ENCODE measurements at regions of chr15 and their contacts with region 1.

Region 1: GRCh38 chr15:70763120-70763878 is at the start of gene UACA:
- DNase-seq: peak; percentile 98 to 99
- H3K4me3 ChIP-seq: peak within 1 kb of the TSS; percentile 96
- H3K4me3 Mint-ChIP-seq: peak within 1 kb of the TSS; percentile 89
- H3K27ac Mint-ChIP-seq: peak within 1 kb of the TSS; percentile 93
- H3K4me1 ChIP-seq: peaks cover 54% of the 10 kb centered on the region
- H3K4me1 Mint-ChIP-seq: peaks cover 37% of the 10 kb centered on the region
- H3K27me3 ChIP-seq: no peaks in the 10 kb centered on the region
- H3K27me3 Mint-ChIP-seq: no peaks in the 10 kb centered on the region
- CTCF ChIP-seq: no peak
- total RNA-seq, gene UACA: 120 and 141 TPM in 2 replicates

Region 2: GRCh38 chr15:70670680-70671079 is 92.6 kb before region 1 on chr15:
- CTCF ChIA-PET with region 1: no interaction called
- POLR2A ChIA-PET with region 1: no interaction called
- intact Hi-C with region 1: no loop called
- DNase-seq: no peak
- H3K4me3 ChIP-seq: no peak overlapping the region
- H3K4me3 Mint-ChIP-seq: no peak overlapping the region
- H3K27ac Mint-ChIP-seq: no peak overlapping the region
- H3K4me1 ChIP-seq: peaks cover 19% of the 10 kb centered on the region
- H3K4me1 Mint-ChIP-seq: no peaks in the 10 kb centered on the region
- H3K27me3 ChIP-seq: no peaks in the 10 kb centered on the region; the same call in 1 of the 2 replicates
- H3K27me3 Mint-ChIP-seq: no peaks in the 10 kb centered on the region
- CTCF ChIP-seq: no peak

Region 3: DNA sequence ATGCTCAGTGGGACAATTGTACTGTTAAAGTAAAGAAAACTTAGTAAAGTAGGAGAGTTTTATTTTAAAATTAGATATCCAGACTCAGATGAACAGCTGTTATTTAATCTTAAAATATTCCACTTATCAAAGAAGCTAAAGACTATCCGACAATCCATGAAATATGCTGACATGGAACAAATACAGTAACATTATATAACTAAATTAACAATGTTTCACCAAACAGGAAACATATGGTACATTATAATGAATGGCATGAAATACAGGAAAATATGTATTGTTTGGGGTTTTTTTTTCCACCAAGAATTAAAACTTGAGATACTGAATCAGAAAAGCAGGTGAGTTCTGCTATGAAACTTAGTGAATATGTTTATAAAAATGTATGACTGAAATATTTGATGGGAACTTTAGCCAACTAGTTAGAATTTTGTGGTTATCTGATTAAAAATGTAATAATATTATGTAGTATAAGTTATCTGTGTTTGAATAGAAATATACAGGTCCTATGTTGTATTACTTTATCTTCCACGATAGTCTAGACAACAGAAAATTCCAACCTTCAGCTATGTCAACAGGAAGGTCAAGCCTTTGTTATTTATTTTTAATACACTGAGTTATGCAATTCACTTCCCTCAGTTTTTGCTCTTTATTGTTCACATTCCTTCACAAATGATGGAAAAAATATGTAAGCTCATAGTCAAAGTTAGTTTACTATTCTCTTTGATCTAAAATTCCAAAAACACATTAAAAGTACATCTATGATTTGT is 72.6 kb before region 1 on chr15:
- CTCF ChIA-PET with region 1: no interaction called
- POLR2A ChIA-PET with region 1: no interaction called
- intact Hi-C with region 1: no loop called
- DNase-seq: no peak
- H3K4me3 ChIP-seq: no peak overlapping the region
- H3K4me3 Mint-ChIP-seq: no peak overlapping the region
- H3K27ac Mint-ChIP-seq: no peak overlapping the region
- H3K4me1 ChIP-seq: peaks cover 30% of the 10 kb centered on the region
- H3K4me1 Mint-ChIP-seq: peaks cover 12% of the 10 kb centered on the region
- H3K27me3 ChIP-seq: no peaks in the 10 kb centered on the region
- H3K27me3 Mint-ChIP-seq: no peaks in the 10 kb centered on the region
- CTCF ChIP-seq: no peak

Region 4: DNA sequence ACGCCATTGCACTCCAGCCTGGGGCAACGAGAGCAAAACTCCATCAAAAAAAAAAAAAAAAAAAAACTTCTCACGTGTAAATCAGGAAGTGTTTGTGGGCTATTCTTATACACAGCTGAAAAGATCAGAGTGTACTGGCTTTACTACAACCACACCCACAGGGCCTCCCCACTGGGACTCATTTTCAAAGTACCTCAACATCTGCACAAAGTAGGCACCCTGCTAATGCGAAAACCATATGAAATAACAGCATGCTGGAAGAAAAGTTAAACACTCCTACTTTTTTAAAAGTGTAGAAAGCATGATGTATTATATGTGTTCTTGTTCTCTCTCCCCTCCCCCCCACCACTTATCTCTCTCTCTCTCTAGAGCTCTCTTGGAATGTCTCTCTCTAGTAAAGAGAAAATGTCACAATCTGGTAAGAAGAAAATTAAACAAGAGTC is 11.1 kb before region 1 on chr15:
- CTCF ChIA-PET with region 1: interaction called, 11 read pairs
- POLR2A ChIA-PET with region 1: no interaction called
- intact Hi-C with region 1: no loop called
- DNase-seq: no peak
- H3K4me3 ChIP-seq: no peak overlapping the region
- H3K4me3 Mint-ChIP-seq: no peak overlapping the region
- H3K27ac Mint-ChIP-seq: no peak overlapping the region
- H3K4me1 ChIP-seq: peaks cover 13% of the 10 kb centered on the region; the same call in 1 of the 2 replicates
- H3K4me1 Mint-ChIP-seq: peaks cover 18% of the 10 kb centered on the region
- H3K27me3 ChIP-seq: no peaks in the 10 kb centered on the region
- H3K27me3 Mint-ChIP-seq: no peaks in the 10 kb centered on the region
- CTCF ChIP-seq: no peak

Region 5: GRCh38 chr15:70778258-70779076 is 15.2 kb after region 1 on chr15:
- CTCF ChIA-PET with region 1: no interaction called
- POLR2A ChIA-PET with region 1: no interaction called
- intact Hi-C with region 1: loop called (anchors 1 kb)
- DNase-seq: no peak
- H3K4me3 ChIP-seq: no peak overlapping the region
- H3K4me3 Mint-ChIP-seq: peak overlapping the region; percentile 51
- H3K27ac Mint-ChIP-seq: peak overlapping the region; percentile 81
- H3K4me1 ChIP-seq: peaks cover 48% of the 10 kb centered on the region
- H3K4me1 Mint-ChIP-seq: peaks cover 47% of the 10 kb centered on the region
- H3K27me3 ChIP-seq: no peaks in the 10 kb centered on the region
- H3K27me3 Mint-ChIP-seq: no peaks in the 10 kb centered on the region
- CTCF ChIP-seq: no peak

Region 6: GRCh38 chr15:70788114-70789049 is 25.1 kb after region 1 on chr15:
- CTCF ChIA-PET with region 1: no interaction called
- POLR2A ChIA-PET with region 1: interaction called, 4 read pairs
- intact Hi-C with region 1: loop called (anchors 1 kb)
- DNase-seq: peak; percentile 83 to 84
- H3K4me3 ChIP-seq: no peak overlapping the region
- H3K4me3 Mint-ChIP-seq: peak overlapping the region; percentile 55
- H3K27ac Mint-ChIP-seq: peak overlapping the region; percentile 91
- H3K4me1 ChIP-seq: peaks cover 84% of the 10 kb centered on the region
- H3K4me1 Mint-ChIP-seq: peaks cover 42% of the 10 kb centered on the region
- H3K27me3 ChIP-seq: no peaks in the 10 kb centered on the region
- H3K27me3 Mint-ChIP-seq: no peaks in the 10 kb centered on the region
- CTCF ChIP-seq: no peak

Region 7: DNA sequence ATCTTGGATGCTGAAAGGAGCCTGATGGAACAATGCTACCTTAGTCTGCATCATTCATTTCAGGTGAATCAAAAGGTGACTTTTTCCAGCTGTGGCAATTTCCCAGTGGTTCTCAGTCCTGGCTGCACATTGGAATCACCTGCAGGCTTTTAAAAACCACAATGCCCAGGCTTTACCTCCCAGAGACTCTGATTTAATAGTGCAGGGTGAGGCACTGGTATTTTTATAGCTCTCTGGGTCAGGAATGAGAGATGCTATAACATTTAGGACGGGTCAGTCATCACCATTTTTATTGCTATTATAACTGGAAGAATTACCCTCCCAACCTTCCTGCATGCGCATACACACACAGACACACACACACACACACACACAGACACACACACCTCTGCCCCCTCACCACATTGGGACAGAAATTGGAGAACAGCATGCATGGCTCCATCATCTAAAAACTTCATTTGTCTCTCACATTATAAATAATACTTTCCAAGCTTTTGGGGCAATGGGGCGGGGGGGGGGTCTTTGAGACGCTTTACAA is 49.6 kb after region 1 on chr15:
- CTCF ChIA-PET with region 1: interaction called, 3 read pairs
- POLR2A ChIA-PET with region 1: interaction called, 6 read pairs
- intact Hi-C with region 1: loop called (anchors 1 kb)
- DNase-seq: no peak
- H3K4me3 ChIP-seq: no peak overlapping the region
- H3K4me3 Mint-ChIP-seq: peak overlapping the region; percentile 72
- H3K27ac Mint-ChIP-seq: no peak overlapping the region
- H3K4me1 ChIP-seq: no peaks in the 10 kb centered on the region
- H3K4me1 Mint-ChIP-seq: peaks cover 25% of the 10 kb centered on the region
- H3K27me3 ChIP-seq: no peaks in the 10 kb centered on the region
- H3K27me3 Mint-ChIP-seq: no peaks in the 10 kb centered on the region
- CTCF ChIP-seq: no peak

Region 8: GRCh38 chr15:70955151-70955550 is 191.9 kb after region 1 on chr15:
- CTCF ChIA-PET with region 1: no interaction called
- POLR2A ChIA-PET with region 1: no interaction called
- intact Hi-C with region 1: no loop called
- DNase-seq: no peak
- H3K4me3 ChIP-seq: no peak overlapping the region
- H3K4me3 Mint-ChIP-seq: no peak overlapping the region
- H3K27ac Mint-ChIP-seq: no peak overlapping the region
- H3K4me1 ChIP-seq: no peaks in the 10 kb centered on the region
- H3K4me1 Mint-ChIP-seq: no peaks in the 10 kb centered on the region
- H3K27me3 ChIP-seq: no peaks in the 10 kb centered on the region
- H3K27me3 Mint-ChIP-seq: peaks cover 17% of the 10 kb centered on the region
- CTCF ChIP-seq: no peak

Region 9: GRCh38 chr15:71060983-71061382 is 297.7 kb after region 1 on chr15:
- CTCF ChIA-PET with region 1: no interaction called
- POLR2A ChIA-PET with region 1: no interaction called
- intact Hi-C with region 1: no loop called
- DNase-seq: no peak
- H3K4me3 ChIP-seq: no peak overlapping the region
- H3K4me3 Mint-ChIP-seq: no peak overlapping the region
- H3K27ac Mint-ChIP-seq: no peak overlapping the region
- H3K4me1 ChIP-seq: no peaks in the 10 kb centered on the region
- H3K4me1 Mint-ChIP-seq: no peaks in the 10 kb centered on the region
- H3K27me3 ChIP-seq: no peaks in the 10 kb centered on the region
- H3K27me3 Mint-ChIP-seq: peaks cover 6% of the 10 kb centered on the region
- CTCF ChIP-seq: no peak

Measured in Caco-2 (cell line).